ENCODE measurements at regions of chr10 and their contacts with region 1.

Region 1: DNA sequence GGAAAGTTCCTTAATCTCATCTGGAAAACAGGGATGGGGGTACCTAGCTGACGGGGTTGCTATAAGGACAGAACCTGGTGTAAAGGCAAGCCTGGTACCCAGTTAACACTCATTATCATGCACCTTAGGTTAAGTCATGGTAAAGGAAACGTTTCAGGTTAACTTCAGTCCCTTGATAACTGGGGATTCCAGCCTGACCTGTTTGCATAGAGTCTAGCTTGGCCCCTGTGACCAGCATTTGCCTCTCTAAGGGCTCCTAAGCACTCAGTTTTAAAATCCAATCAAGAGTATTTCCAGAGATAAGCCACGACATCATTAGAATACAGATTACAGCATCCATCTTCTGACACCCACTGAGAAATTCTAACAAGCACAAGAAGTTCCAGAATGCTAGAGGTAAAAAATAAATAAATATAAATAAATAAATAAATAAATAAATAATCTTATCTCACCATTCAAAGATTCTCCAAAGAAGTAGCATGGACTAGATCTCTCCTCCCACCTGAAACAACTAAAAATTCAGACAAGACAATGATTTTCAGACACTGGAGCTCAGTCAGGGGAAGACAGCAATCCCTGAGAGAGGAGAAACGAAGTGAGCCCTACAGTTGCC is 184.6 kb downstream of the KCNMA1 start:
- DNase-seq: no peak
- ATAC-seq: no peak
- H3K4me3 ChIP-seq: no peak overlapping the region
- H3K27ac ChIP-seq: no peak overlapping the region
- H3K4me1 ChIP-seq: peaks cover 3% of the 10 kb centered on the region; the same call in 1 of the 2 replicates
- H3K27me3 ChIP-seq: no peaks in the 10 kb centered on the region
- CTCF ChIP-seq: no peak
- POLR2A ChIP-seq: no peak
- RAD21 ChIP-seq: no peak

Region 2: GRCh38 chr10:77467422-77467963 is 14.4 kb after region 1 on chr10:
- CTCF ChIA-PET with region 1: no interaction called
- POLR2A ChIA-PET with region 1: no interaction called
- dilution Hi-C with region 1: no loop called
- in situ Hi-C with region 1: no loop called
- intact Hi-C with region 1: loop called (anchors 2 kb)
- DNase-seq: no peak
- ATAC-seq: no peak
- H3K4me3 ChIP-seq: no peak overlapping the region
- H3K27ac ChIP-seq: no peak overlapping the region
- H3K4me1 ChIP-seq: no peaks in the 10 kb centered on the region
- H3K27me3 ChIP-seq: no peaks in the 10 kb centered on the region
- CTCF ChIP-seq: no peak
- POLR2A ChIP-seq: no peak
- RAD21 ChIP-seq: no peak

Region 3: GRCh38 chr10:77513781-77514331 is 60.8 kb after region 1 on chr10:
- CTCF ChIA-PET with region 1: no interaction called
- POLR2A ChIA-PET with region 1: no interaction called
- dilution Hi-C with region 1: no loop called
- in situ Hi-C with region 1: no loop called
- intact Hi-C with region 1: no loop called
- DNase-seq: peak; percentile 91
- ATAC-seq: peak; percentile 98
- H3K4me3 ChIP-seq: no peak overlapping the region
- H3K27ac ChIP-seq: no peak overlapping the region
- H3K4me1 ChIP-seq: peaks cover 22% of the 10 kb centered on the region
- H3K27me3 ChIP-seq: no peaks in the 10 kb centered on the region
- CTCF ChIP-seq: no peak
- POLR2A ChIP-seq: no peak
- RAD21 ChIP-seq: peak; percentile 29

Region 4: GRCh38 chr10:78211561-78212051 is 758.5 kb after region 1 on chr10:
- CTCF ChIA-PET with region 1: no interaction called
- POLR2A ChIA-PET with region 1: no interaction called
- dilution Hi-C with region 1: no loop called
- in situ Hi-C with region 1: no loop called
- intact Hi-C with region 1: no loop called
- DNase-seq: peak; percentile 67
- ATAC-seq: peak; percentile 77
- H3K4me3 ChIP-seq: no peak overlapping the region
- H3K27ac ChIP-seq: no peak overlapping the region
- H3K4me1 ChIP-seq: peaks cover 12% of the 10 kb centered on the region
- H3K27me3 ChIP-seq: peaks cover 3% of the 10 kb centered on the region; the same call in 1 of the 2 replicates
- CTCF ChIP-seq: peak; percentile 81
- POLR2A ChIP-seq: no peak
- RAD21 ChIP-seq: peak; percentile 90